ENCODE measurements at regions of chr2 and their contacts with region 1.

Region 1: DNA sequence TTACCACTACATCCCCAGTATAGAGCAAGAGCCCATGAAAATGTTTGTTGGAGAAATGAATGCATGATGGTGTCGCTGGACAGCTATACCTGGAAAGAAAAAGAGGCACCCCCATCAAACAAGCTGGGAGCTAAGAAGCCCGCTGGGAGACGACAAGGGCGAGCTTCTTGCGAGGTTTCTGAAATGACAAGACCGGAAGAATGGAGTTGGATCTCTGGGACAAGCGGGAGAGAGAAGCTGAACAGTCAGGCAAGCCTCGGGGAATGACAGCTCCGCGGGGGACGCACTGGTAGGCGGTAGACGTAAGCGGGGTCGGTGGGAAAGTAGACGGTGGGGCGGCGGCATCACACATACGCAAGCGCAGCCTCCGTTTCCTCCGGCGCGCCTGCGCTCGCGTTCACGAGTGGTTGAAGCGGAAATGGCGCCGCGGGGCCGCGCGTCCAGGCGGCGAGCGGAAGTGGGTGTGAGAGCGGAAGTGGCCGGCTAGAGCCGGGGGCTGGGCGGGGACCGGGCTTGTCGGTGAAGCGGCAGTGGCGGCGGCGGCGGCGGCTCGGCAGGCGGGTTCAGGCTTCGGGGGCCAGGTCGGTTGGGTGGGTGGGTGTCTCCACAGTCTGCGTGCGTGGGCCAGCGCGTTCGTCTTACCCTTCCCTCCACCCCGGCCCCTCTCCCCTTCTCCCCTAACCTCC is at the start of gene ARPC2:
- DNase-seq: peak; percentile 92 to 97 (median 93)
- H3K4me3 ChIP-seq: peak within 1 kb of the TSS; percentile 81
- H3K27ac ChIP-seq: peak within 1 kb of the TSS; percentile 72 to 90
- H3K4me1 ChIP-seq: peaks cover 8% of the 10 kb centered on the region
- H3K27me3 ChIP-seq: no peaks in the 10 kb centered on the region
- CTCF ChIP-seq: peak; percentile 34 to 77 (median 65)
- EP300 ChIP-seq: no peak
- POLR2A ChIP-seq: peak; percentile 93
- total RNA-seq, gene ARPC2: 135 to 229 (median 166) TPM

Region 2: GRCh38 chr2:218260742-218261437 is 44.1 kb after region 1 on chr2 and contains the start of gene GPBAR1:
- intact Hi-C with region 1: loop called in 2 of 4 experiments (anchors 5 kb)
- DNase-seq: peak in 2 of 5 donors; percentile 32 to 54
- H3K4me3 ChIP-seq: no peak within 1 kb of the TSS
- H3K27ac ChIP-seq: peak within 1 kb of the TSS; percentile 71 to 80
- H3K4me1 ChIP-seq: peaks cover 22% of the 10 kb centered on the region
- H3K27me3 ChIP-seq: no peaks in the 10 kb centered on the region
- CTCF ChIP-seq: no peak
- EP300 ChIP-seq: no peak
- POLR2A ChIP-seq: no peak
- total RNA-seq, gene GPBAR1: 0.38 to 3.8 (median 2.1) TPM

Region 3: GRCh38 chr2:218381916-218382366 is 165.1 kb after region 1 on chr2 and contains the start of gene SLC11A1:
- intact Hi-C with region 1: no loop called
- DNase-seq: peak in 1 of 5 donors; percentile 21
- H3K4me3 ChIP-seq: no peak within 1 kb of the TSS
- H3K27ac ChIP-seq: no peak within 1 kb of the TSS
- H3K4me1 ChIP-seq: peaks cover under 1% of the 10 kb centered on the region
- H3K27me3 ChIP-seq: no peaks in the 10 kb centered on the region
- CTCF ChIP-seq: no peak
- EP300 ChIP-seq: no peak
- POLR2A ChIP-seq: peak; percentile 7
- total RNA-seq, gene SLC11A1: 1.0 to 28.9 (median 8.7) TPM